Right ventricle myocardium inferior (tissue), 1 donor: ENCODE measurements at regions of chr22 and their contacts with region 1.

Region 1: DNA sequence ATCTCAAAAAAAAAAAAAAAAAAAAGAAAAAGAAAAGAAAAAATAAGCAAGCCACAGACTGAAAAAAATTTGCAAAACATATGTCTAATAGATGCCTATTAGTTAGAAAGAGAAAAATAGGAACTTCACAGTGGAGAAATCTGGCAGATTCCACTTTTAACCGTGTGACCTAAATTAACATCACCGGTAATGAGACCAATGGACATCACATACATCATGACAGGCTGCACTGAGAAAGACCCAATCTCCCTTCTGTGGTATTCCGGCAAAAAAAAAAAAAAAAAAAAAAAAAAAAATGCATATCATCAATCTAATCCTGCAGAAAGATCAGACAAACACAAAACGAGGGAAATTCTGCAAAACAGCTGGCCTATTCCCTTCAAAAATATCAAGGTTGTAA is 46.7 kb upstream of the CECR2 start:
- DNase-seq: no peak
- ATAC-seq: no peak

Region 2: DNA sequence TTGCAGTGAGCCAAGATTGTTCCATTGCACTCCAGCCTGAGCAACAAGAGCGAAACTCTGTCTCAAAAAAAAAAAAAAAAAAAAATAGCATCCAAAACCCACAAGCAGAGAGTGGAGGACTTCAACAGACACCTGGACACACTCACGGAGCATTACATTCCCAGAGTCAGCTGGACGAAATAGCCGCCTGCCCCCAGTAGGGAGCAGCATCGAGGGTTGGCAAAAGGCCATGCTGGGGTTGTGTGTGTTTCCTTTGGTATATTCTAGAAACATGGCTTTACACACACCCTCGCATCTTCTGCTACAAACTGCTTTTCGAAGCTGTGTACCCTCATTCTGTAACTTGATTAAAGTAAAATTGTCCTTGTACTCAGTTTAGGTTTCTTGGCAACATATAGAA is 108.5 kb before region 1 on chr22:
- intact Hi-C with region 1: loop called (anchors 10 kb)
- DNase-seq: no peak
- ATAC-seq: peak; percentile 62